Gastrocnemius medialis (tissue), 4 donors: ENCODE measurements at regions of chr10 and their contacts with region 1.

Region 1: DNA sequence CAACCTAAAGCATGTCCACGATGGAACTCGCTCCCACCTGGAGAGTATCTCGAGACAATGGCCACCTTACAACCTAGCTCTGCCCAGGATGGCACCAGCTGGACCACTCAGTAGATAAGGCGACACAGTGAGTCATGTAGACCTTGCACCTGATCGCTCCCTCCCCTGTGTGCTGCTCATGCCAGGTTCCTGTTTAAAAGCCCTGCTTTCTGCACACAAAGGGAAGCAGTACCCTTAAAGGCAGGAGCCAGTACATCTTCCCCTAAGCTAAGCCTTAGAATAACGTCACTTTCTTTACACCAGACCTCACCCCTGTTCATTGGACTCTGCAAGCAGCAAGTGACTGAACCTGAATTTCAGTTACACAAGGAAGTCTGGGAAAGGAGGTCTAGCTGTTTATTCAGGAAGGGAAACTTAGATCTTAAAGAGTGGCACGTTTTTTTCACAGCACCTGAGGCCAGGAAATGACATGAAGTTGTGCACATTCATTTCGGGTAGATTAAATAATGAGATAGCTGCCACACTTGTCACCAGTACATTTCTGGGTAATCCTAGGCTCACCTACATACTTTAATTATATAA is 117.9 kb downstream of the MTPAP start:
- DNase-seq: no peak
- ATAC-seq: no peak
- H3K4me3 ChIP-seq: no peak overlapping the region
- H3K27ac ChIP-seq: no peak overlapping the region
- H3K4me1 ChIP-seq: no peaks in the 10 kb centered on the region
- H3K27me3 ChIP-seq: no peaks in the 10 kb centered on the region
- CTCF ChIP-seq: no peak
- POLR2A ChIP-seq: no peak

Region 2: GRCh38 chr10:30059209-30060107 is 171.7 kb before region 1 on chr10 and contains the start of gene JCAD:
- in situ Hi-C with region 1: no loop called
- intact Hi-C with region 1: loop called (anchors 10 kb)
- DNase-seq: peak; percentile 38 to 60
- ATAC-seq: peak; percentile 73 to 80
- H3K4me3 ChIP-seq: peak within 1 kb of the TSS; percentile 66 to 84 (median 68)
- H3K27ac ChIP-seq: peak within 1 kb of the TSS; percentile 67 to 81 (median 76)
- H3K4me1 ChIP-seq: peaks cover 0 to 5% of the 10 kb centered on the region in 2 donors
- H3K27me3 ChIP-seq: no peaks in the 10 kb centered on the region
- CTCF ChIP-seq: peak in 2 of 5 experiments; percentile 16 to 23
- POLR2A ChIP-seq: peak; percentile 50 to 76
- total RNA-seq, gene JCAD: 6.0 to 12.1 (median 6.5) TPM